Posterior cingulate gyrus (tissue), 11 donors: ENCODE measurements at regions of chr20 and their contacts with region 1.

Region 1: DNA sequence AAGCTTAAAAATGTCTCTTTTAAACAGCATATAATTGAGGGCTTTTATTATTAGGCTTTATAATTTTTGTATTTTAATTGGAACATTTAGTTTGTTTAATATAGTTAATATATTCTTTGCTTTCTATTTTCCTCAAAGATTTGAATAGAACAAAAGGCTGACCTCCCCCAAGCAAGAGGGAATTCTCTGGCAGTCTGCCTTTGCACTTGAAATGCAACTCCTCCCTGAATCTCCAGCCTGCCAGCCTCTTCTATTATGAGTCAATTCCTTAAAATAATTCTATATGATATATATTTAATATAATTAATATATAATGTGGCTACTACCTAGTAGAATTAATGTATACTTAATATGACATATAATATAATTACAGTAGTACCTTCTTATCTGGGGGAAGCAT is 69.2 kb downstream of the PTPRA start:
- DNase-seq: peak in 1 of 10 donors; percentile 16

Region 2: GRCh38 chr20:2814587-2815051 is 127.8 kb before region 1 on chr20 and contains the start of gene C20orf141:
- intact Hi-C with region 1: no loop called
- DNase-seq: no peak

Region 3: DNA sequence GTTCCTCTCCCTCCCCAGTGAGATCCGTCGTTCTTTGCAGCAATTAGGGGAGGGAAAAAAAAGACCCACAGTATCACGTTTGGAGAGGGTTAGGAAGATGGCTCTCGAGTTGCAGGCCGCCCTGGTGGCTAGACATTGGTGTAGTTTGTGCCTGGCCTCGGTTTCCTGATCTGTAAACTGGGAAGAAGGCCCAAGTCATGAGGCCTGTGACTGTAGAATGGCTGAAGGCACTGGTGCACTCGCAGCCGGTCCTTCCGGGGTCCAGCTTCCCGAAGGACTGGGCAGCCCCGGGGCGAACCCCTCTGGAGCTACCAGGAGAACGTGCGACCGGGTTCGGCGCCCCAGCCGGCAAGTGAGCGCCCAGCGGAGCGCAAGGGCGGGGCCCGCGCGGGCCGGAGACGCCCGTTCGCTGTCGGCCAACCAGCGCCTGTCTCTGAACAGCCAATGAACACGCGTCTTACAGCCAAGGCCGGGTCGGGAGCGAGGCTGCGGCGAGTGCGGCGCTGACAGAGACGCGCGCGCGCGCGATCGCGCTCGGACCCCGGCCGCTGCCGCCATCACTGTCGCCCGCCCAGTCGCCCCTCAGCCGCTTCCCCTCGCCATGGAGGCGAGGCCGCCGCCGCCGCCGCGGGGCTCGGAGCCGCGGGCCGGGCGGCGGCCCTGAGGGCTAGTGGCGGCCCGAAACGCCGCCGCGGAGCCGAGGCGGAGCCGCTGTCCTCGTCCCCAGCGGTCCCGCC is 69.3 kb before region 1 on chr20 and contains the start of gene PTPRA:
- intact Hi-C with region 1: loop called (anchors 5 kb)
- DNase-seq: peak; percentile 93 to 99 (median 96)